Activated CD4-positive, alpha-beta T cell treated with anti-CD3 and anti-CD28 coated beads, Interleukin-2, amount 10 ng/mL, durations not matched to agents 24 days and 14 days (primary cell): ENCODE measurements at regions of chr10 and their contacts with region 1.

Region 1: DNA sequence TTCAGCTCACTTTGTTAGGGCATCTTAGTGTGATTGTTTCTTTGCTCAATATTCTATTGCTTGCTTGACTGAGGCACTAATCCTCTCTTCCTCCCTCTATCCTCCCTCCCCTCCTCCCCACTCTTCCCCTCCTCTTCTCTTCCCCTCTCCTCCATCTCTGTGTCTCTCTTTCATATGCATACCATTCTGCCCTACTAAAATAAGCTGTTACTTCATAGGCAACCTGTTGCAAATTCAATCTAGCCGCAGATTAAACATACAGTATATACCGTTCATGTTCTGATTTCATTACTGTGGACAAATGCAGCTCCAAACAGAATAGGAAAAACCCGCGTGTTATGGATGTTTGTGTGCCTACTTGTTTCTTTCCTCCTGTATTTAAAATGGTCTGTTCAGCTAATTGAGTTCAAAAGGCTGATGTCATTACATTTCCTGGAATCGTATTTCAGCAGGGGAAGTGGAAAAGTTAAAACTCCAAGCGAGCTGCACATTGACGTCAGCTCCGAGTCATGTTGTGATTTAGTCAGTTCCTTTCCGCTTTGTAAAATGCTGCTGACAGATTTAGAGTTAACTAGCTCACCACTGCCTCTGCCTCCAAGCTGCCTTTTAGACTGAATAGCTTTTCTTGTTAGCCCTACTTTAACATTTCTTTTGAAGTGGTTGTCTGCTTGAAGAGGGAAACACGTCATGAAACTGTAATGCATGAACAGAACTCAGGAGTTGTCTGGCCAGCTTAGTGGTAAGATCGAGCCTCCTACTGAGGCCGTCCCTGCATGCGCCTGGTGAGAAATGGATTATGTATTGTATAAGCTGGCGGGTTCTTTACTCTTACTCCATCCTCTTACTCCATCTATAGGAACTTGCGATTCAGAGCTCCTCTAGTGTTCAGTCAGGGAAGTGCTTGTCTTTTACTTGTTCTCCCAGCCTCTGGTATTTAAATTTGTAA is 69.0 kb downstream of the CREM start:
- DNase-seq: peak; percentile 94
- H3K4me3 Mint-ChIP-seq: peak overlapping the region; percentile 95
- H3K27ac Mint-ChIP-seq: peak overlapping the region; percentile 99
- H3K4me1 Mint-ChIP-seq: peaks cover 41% of the 10 kb centered on the region
- H3K27me3 Mint-ChIP-seq: no peaks in the 10 kb centered on the region

Region 2: DNA sequence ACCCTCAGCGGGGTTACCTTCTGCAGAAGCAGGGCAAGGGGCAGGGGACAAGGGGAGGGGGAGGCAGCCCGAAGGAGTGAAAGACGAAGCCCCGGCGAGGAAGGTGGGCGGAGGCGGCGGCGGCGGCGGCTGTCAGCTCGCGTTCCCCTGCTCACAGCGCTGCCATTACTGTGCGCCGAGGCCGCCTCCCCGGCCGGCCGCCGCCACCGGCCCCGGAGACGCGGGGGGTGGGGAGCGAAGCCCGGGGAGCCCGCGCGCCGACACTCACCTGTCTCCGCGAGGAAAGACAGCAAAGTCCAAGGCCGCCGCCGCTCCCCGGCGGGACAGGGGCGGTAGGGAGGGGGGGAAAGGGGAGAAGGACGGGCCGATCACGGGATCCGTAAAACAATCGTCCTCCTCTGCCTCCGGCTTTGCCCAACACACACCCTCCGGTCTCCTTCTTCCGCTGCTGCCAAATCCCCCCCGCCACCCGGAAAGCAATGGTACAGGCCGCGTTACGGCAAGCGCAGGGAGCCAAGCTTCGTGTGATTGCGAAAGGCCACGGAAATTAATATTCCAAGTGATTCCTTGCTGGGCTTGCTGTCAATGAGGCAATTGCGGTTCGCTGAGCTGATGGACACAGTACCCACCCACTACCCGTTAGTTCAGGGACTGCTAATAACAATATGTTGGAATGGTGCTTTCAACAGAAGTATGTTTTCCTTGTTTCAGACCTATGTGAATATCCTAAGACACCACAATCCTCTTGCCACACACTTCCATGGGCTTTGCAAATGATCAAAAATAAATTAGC is 105.3 kb before region 1 on chr10 and contains the start of gene CUL2:
- intact Hi-C with region 1: loop called (anchors 1 kb)
- DNase-seq: peak; percentile 98
- H3K4me3 Mint-ChIP-seq: peak within 1 kb of the TSS; percentile 84
- H3K27ac Mint-ChIP-seq: peak within 1 kb of the TSS; percentile 97
- H3K4me1 Mint-ChIP-seq: peaks cover 40% of the 10 kb centered on the region
- H3K27me3 Mint-ChIP-seq: peaks cover 5% of the 10 kb centered on the region
- total RNA-seq, gene CUL2: 50.2 and 50.4 TPM in 2 replicates

Region 3: DNA sequence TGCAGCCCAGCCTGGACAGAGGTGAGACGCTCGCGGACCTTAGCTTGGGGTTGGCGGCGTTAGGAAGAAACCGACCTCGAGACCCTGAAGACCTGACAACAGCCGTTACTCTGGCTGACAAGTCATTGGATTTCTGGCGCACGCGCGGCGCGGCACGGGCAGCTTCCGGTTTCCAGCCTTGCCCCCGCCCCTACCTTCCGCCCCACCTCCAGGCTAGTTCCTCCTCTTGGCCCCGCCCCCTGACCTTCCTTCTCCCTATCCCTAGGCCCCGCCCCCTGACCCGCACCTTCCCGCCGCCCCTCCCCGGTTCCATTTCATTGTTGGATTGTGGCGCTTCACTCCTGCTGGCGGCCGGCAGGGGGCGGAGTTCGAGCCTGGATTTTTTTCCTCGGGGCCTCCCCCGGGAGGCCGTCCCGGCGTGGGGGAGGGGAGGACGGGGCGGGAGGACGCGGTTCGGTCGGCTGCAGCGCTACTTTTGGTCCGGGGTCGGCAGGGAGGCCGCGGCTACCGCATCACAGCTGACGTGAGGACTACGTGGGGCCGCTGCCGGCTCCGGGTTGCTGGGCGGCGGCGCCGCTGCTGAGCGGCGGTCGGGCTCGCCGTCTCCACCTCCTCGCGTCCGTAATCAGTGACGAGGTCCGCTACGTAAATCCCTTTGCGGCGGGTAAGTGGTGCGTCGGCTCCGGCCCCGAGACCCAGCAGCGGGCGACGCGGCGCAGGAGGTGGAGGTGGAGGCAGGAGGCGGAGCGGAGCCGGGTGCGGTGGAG is 68.9 kb before region 1 on chr10 and contains the start of gene CREM:
- intact Hi-C with region 1: loop called (anchors 1 kb)
- DNase-seq: peak; percentile 99
- H3K4me3 Mint-ChIP-seq: peak within 1 kb of the TSS; percentile 99
- H3K27ac Mint-ChIP-seq: peak within 1 kb of the TSS; percentile 99
- H3K4me1 Mint-ChIP-seq: peaks cover 46% of the 10 kb centered on the region
- H3K27me3 Mint-ChIP-seq: no peaks in the 10 kb centered on the region
- total RNA-seq, gene CREM: 87.0 and 87.8 TPM in 2 replicates

Region 4: GRCh38 chr10:35133586-35133985 is 62.0 kb before region 1 on chr10:
- intact Hi-C with region 1: loop called (anchors 1 kb)
- DNase-seq: no peak
- H3K4me3 Mint-ChIP-seq: peak overlapping the region; percentile 69
- H3K27ac Mint-ChIP-seq: peak overlapping the region; percentile 93
- H3K4me1 Mint-ChIP-seq: peaks cover 50% of the 10 kb centered on the region
- H3K27me3 Mint-ChIP-seq: no peaks in the 10 kb centered on the region

Region 5: GRCh38 chr10:35153716-35154479 is 41.7 kb before region 1 on chr10:
- intact Hi-C with region 1: loop called (anchors 1 kb)
- DNase-seq: no peak
- H3K4me3 Mint-ChIP-seq: no peak overlapping the region
- H3K27ac Mint-ChIP-seq: no peak overlapping the region
- H3K4me1 Mint-ChIP-seq: peaks cover 37% of the 10 kb centered on the region
- H3K27me3 Mint-ChIP-seq: no peaks in the 10 kb centered on the region

Region 6: GRCh38 chr10:35208536-35208935 is 12.9 kb after region 1 on chr10:
- intact Hi-C with region 1: loop called (anchors 1 kb)
- DNase-seq: peak; percentile 91
- H3K4me3 Mint-ChIP-seq: peak overlapping the region; percentile 80
- H3K27ac Mint-ChIP-seq: peak overlapping the region; percentile 92
- H3K4me1 Mint-ChIP-seq: peaks cover 48% of the 10 kb centered on the region
- H3K27me3 Mint-ChIP-seq: no peaks in the 10 kb centered on the region

Region 7: GRCh38 chr10:35236739-35237138 is 41.1 kb after region 1 on chr10:
- intact Hi-C with region 1: no loop called
- DNase-seq: no peak
- H3K4me3 Mint-ChIP-seq: no peak overlapping the region
- H3K27ac Mint-ChIP-seq: no peak overlapping the region
- H3K4me1 Mint-ChIP-seq: no peaks in the 10 kb centered on the region
- H3K27me3 Mint-ChIP-seq: no peaks in the 10 kb centered on the region

Region 8: DNA sequence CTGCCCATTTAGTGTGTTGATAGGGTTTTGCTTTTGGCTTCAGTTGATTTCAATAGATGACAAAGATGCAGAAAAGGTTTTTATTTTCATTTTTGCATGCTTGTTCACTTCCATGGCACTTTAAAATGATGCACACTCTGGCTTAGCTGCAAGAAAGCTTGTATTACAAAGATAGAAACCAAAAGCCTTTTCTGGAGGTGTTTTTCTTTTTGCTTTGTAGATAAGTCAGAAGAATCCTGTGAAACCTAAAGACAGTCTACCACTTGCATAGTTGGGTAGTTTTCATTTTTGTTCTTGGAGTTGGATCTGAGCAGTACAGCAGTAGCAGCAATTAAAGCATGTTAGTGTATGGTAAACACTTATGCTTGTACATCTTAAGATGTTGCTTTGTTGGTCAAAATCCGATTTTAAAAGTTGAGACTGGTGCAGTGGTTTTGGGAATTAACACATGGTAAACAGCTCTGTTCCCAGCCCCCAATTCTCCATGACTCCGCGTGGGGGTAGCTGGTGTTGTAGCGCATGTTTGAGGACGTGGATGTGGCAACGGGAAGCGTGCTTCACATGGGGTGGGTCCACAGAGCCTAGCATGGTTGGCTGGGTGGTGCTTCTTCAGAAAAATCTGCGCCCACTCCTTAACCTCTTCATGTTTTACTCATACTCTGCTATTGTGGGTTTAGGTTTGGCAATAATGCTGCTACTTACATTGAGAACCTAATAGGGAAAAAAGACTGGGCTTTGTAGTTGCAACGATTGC is 160.5 kb after region 1 on chr10:
- intact Hi-C with region 1: loop called (anchors 1 kb)
- DNase-seq: peak; percentile 72
- H3K4me3 Mint-ChIP-seq: peak overlapping the region; percentile 75
- H3K27ac Mint-ChIP-seq: peak overlapping the region; percentile 98
- H3K4me1 Mint-ChIP-seq: peaks cover 58% of the 10 kb centered on the region
- H3K27me3 Mint-ChIP-seq: no peaks in the 10 kb centered on the region

Region 9: DNA sequence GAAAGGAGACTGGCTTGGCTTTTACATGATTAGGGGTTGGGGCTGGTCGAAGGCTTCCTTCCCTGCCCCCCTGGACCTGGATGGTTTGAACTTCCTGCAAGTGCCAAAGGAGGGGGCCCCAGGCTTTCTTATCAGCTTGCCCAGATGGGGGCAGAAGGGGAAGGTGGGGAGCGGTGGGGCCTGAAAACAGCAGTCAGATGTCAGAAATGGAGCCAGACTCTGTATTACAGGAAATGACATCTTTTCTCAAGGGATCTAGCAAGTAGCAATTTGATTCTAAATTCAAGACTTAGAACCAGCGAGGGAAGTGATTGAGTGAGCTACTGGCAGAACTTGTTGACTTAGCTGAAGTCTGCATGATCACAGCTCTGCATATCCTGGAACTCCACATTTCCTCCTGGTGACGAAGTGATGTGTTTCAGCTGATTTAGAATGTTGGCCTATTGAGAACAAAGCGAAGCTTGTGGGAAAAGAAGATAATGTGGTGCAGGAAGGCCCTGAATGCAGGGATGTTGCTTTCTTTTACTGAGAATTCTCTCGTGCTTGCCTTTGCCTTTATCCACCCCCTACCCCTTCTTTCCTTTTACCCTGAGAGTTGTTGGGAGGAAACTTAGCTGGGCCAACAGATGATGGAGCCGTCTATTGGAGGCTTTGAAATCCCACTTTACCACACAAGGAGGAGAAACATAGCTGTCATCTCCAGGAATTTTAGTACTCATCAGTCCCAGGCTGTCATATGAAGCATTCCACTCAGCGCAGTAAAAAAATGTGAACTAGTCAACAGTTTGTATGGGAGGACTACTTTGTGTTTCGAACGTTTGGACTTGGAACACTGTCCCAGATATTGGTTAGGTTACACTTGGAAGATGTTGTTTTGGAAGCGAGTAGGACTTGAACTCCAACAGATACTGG is 183.8 kb after region 1 on chr10:
- intact Hi-C with region 1: no loop called
- DNase-seq: peak; percentile 59
- H3K4me3 Mint-ChIP-seq: peak overlapping the region; percentile 14
- H3K27ac Mint-ChIP-seq: peak overlapping the region; percentile 14
- H3K4me1 Mint-ChIP-seq: peaks cover 36% of the 10 kb centered on the region
- H3K27me3 Mint-ChIP-seq: no peaks in the 10 kb centered on the region

Region 10: DNA sequence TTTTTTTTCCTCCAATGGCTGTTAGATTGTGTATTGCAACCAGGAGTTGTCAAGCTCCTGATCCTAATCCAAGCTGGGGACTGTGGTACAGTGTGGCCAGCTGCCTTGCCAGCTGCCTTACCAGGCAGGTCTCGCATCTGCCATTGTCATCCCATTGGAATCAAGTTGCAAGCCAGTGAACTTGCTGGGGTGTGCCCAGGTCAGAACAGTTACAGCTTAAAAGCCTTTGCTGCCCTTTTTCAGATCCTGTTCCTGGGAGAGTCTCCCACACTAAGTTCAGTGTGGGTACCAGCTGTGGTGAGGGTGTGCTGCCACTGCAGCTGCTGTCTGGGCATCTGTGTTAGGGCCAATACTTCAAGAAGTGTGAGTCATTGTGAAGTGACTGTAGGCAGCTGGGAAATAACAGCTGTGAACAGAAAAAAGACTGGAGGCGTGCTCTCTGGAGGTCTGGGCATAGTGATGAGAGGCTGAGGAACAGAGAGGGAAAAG is 213.5 kb after region 1 on chr10:
- intact Hi-C with region 1: no loop called
- DNase-seq: no peak
- H3K4me3 Mint-ChIP-seq: no peak overlapping the region
- H3K27ac Mint-ChIP-seq: no peak overlapping the region
- H3K4me1 Mint-ChIP-seq: peaks cover 27% of the 10 kb centered on the region
- H3K27me3 Mint-ChIP-seq: no peaks in the 10 kb centered on the region